Panc1 (cell line): ENCODE measurements at regions of chr9 and their contacts with region 1.

Region 1: DNA sequence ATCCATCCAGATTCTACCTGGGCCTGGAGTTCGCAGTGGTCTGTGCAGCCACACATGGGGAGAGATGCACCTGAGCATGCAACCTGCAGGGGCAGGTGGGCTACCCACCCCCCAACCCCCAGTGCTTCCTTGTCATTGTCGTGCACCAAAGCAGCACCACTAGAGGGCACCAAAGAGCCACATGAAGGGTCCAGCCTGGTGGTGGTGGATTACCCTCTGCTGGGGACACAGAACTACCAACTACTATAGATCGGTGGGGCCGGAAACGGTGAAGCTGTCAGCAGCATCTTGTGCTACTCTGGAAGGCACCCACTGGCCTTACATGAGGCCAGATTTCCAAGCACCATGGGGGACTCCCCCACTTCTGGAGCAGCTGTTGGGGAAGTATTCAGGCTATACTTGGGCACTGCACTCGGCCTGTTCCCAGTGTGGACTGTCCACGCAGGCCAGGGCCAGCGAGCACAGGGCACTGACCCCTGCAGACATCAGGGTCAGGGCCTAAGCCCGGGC is 60.2 kb upstream of the TBC1D2 start:
- DNase-seq: peak; percentile 50
- ATAC-seq: peak; percentile 97
- H3K4me3 ChIP-seq: no peak overlapping the region
- H3K27ac ChIP-seq: no peak overlapping the region
- H3K4me1 ChIP-seq: no peaks in the 10 kb centered on the region
- H3K27me3 ChIP-seq: no peaks in the 10 kb centered on the region
- CTCF ChIP-seq: peak; percentile 87

Region 2: GRCh38 chr9:98707166-98708102 is 391.8 kb after region 1 on chr9:
- CTCF ChIA-PET with region 1: no interaction called
- POLR2A ChIA-PET with region 1: no interaction called
- in situ Hi-C with region 1: no loop called
- intact Hi-C with region 1: loop called (anchors 5 kb)
- DNase-seq: no peak
- ATAC-seq: peak; percentile 87
- H3K4me3 ChIP-seq: peak overlapping the region; percentile 17 to 23
- H3K27ac ChIP-seq: no peak overlapping the region
- H3K4me1 ChIP-seq: no peaks in the 10 kb centered on the region; the same call in 1 of the 2 replicates
- H3K27me3 ChIP-seq: no peaks in the 10 kb centered on the region; the same call in 1 of the 2 replicates
- CTCF ChIP-seq: peak; percentile 81

Region 3: DNA sequence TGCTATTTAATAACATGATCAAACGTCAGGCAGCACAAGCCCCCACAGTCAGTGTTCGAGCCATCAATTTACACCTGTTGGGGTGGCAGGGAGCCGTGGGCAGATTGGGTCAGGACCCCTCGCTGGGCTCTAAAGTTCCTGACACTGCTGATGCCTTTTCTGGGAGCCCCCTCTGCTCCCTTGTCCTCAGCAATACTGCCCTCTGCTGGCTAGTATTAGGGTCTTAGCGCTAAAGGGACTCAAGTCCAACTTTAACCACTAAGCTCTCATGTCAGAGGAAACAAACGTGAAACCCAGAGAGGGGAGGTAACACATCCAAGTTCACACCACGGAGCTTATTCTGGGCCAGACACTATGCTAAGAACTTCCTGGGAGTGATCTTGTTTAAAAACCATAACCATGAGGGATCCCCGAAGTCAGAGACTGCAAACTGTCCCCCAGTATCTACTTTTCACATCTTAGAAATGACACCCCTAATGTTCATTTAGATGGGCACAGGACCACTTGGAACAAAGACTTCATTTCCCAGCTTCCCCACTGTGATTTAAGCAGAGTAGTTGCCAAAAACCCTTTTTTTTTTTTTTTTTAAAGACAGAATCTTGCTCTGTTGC is 460.3 kb after region 1 on chr9:
- CTCF ChIA-PET with region 1: interaction called, 5 read pairs
- POLR2A ChIA-PET with region 1: no interaction called
- in situ Hi-C with region 1: no loop called
- intact Hi-C with region 1: loop called (anchors 5 kb)
- DNase-seq: peak; percentile 18
- ATAC-seq: peak; percentile 82
- H3K4me3 ChIP-seq: no peak overlapping the region
- H3K27ac ChIP-seq: no peak overlapping the region
- H3K4me1 ChIP-seq: no peaks in the 10 kb centered on the region
- H3K27me3 ChIP-seq: no peaks in the 10 kb centered on the region
- CTCF ChIP-seq: peak; percentile 76